Activated CD4-positive, alpha-beta T cell treated with anti-CD3 and anti-CD28 coated beads for 36 hours (primary cell): ENCODE measurements at regions of chr3 and their contacts with region 1.

Region 1: GRCh38 chr3:170037463-170038433 is at the start of gene GPR160:
- DNase-seq: peak; percentile 92
- ATAC-seq: peak; percentile 92
- H3K4me3 Mint-ChIP-seq: peak within 1 kb of the TSS; percentile 79
- H3K27ac Mint-ChIP-seq: no peak within 1 kb of the TSS
- H3K4me1 Mint-ChIP-seq: peaks cover 19% of the 10 kb centered on the region
- H3K27me3 Mint-ChIP-seq: no peaks in the 10 kb centered on the region
- total RNA-seq, gene GPR160: 9.4 to 11.1 TPM

Region 2: DNA sequence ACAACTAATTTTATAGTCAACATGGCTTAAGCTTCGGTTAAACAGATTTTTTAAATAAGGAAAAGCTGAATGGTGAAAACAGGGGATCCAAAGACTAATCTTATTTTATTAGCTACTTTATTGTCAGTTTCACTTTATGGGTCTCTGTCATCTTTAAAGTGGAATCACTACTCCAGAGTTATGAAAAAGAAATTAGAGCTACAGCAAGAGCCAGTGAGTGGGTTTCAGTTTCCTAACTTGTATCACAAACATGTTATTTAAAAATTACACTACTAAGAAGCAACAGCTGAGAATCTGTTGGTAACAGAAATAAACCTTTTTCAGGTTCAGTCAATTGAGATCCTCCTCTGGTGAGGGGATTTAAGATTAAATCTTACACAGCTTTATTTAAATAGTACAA is 133.8 kb after region 1 on chr3:
- CTCF ChIA-PET with region 1: no interaction called
- POLR2A ChIA-PET with region 1: no interaction called
- intact Hi-C with region 1: loop called in 1 of 2 experiments (anchors 5 kb)
- DNase-seq: no peak
- ATAC-seq: peak; percentile 79
- H3K4me3 Mint-ChIP-seq: peak overlapping the region; percentile 32
- H3K27ac Mint-ChIP-seq: peak overlapping the region; percentile 63
- H3K4me1 Mint-ChIP-seq: peaks cover 64% of the 10 kb centered on the region
- H3K27me3 Mint-ChIP-seq: no peaks in the 10 kb centered on the region